ENCODE measurements at regions of chr7 and their contacts with region 1.

Region 1: DNA sequence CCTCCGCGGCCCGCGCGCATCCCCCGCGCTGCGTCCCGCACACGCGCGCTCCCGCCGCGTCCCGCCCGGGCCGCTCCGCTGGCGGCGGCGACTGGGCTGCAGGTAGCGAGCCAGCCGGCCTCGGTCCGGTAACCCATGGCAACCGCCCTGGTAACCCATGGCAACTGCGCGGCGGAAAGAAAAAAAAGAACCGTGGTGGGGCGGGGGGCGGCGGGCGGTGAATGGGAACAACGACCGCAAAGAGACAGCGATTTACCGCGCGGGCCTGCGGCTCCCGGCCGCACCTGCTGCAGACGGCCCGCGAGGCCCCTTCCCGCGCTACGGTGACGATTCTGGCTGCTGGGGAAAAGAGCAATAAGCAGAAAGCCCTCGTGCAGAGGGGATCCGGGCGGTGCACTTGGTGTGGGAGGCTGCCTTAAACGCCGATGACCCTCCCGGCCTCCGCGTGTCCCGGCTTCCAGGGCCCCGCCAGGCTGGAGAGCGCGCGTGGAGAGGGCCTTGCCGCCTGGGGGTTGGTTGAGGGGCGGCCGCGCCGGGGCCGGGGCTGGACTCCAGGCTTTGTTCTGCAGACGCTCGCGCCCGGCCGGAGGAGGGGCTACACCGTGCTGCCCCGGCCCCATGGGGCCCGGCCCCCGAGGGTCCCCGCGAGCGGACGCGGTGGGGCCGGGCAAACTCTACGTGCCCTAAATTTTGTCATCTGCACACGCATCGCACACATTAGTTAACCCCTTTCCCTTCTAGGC is 84.7 kb downstream of the SNX10 start:
- H3K4me3 Mint-ChIP-seq: peak overlapping the region; percentile 79
- H3K27ac Mint-ChIP-seq: peak overlapping the region; percentile 41
- H3K4me1 Mint-ChIP-seq: peaks cover 17% of the 10 kb centered on the region
- H3K27me3 Mint-ChIP-seq: peaks cover 26% of the 10 kb centered on the region

Region 2: GRCh38 chr7:26500749-26501352 is 124.5 kb after region 1 on chr7:
- intact Hi-C with region 1: loop called (anchors 2 kb)
- H3K4me3 Mint-ChIP-seq: no peak overlapping the region
- H3K27ac Mint-ChIP-seq: no peak overlapping the region
- H3K4me1 Mint-ChIP-seq: no peaks in the 10 kb centered on the region
- H3K27me3 Mint-ChIP-seq: peaks cover 8% of the 10 kb centered on the region

Region 3: DNA sequence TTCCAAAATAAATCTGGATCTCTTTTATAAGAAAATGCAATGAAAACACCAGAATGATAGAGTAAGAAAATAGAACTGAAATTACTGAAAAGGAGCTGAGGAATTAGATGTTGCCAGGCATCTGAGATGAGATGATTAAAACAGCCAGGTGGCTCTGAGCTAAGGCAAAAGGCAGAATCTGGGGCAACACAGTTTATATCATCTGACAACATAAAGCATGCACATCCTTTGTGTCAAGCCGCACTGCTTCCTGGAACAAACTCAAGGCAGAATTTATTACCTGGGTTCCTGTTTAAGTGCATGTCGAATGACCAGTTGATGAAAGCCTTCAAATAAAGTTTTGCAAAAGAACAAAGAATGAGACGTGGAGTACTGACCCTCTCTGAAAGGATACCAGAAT is 162.3 kb after region 1 on chr7:
- intact Hi-C with region 1: no loop called
- H3K4me3 Mint-ChIP-seq: no peak overlapping the region
- H3K27ac Mint-ChIP-seq: no peak overlapping the region
- H3K4me1 Mint-ChIP-seq: no peaks in the 10 kb centered on the region
- H3K27me3 Mint-ChIP-seq: peaks cover 49% of the 10 kb centered on the region